ENCODE measurements at regions of chr2 and their contacts with region 1.

Region 1: DNA sequence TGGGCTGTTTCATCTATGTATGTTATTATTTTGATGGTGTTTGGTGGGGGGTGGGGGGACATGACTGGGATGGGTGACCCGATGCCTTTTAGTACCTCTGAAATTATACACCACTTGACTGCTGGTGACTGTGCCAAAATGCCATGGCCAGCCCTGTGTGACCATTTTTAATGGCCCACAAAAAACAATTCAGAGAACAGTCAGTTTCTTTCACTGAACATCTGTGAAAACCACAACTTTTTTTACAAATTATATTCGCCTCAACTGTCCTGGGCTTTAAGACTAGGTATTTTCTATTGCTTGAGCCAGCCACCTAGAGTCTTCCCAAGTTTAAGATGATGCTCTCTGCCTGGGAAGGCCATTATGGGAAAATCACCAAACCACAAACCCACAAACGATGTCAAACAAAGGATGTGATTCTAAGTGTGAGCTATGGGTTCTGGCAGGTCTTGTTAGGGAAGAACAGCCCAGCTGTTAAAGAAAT is 33.9 kb downstream of the FN1 start:
- DNase-seq: peak; percentile 78
- ATAC-seq: peak; percentile 94
- H3K4me3 ChIP-seq: no peak overlapping the region
- H3K27ac ChIP-seq: peak overlapping the region; percentile 36
- H3K4me1 ChIP-seq: peaks cover 12% of the 10 kb centered on the region
- H3K27me3 ChIP-seq: no peaks in the 10 kb centered on the region
- CTCF ChIP-seq: no peak

Region 2: GRCh38 chr2:215356948-215357461 is 44.9 kb before region 1 on chr2:
- CTCF ChIA-PET with region 1: no interaction called
- POLR2A ChIA-PET with region 1: no interaction called
- intact Hi-C with region 1: no loop called
- DNase-seq: no peak
- ATAC-seq: no peak
- H3K4me3 ChIP-seq: no peak overlapping the region
- H3K27ac ChIP-seq: no peak overlapping the region
- H3K4me1 ChIP-seq: no peaks in the 10 kb centered on the region
- H3K27me3 ChIP-seq: no peaks in the 10 kb centered on the region
- CTCF ChIP-seq: no peak

Region 3: DNA sequence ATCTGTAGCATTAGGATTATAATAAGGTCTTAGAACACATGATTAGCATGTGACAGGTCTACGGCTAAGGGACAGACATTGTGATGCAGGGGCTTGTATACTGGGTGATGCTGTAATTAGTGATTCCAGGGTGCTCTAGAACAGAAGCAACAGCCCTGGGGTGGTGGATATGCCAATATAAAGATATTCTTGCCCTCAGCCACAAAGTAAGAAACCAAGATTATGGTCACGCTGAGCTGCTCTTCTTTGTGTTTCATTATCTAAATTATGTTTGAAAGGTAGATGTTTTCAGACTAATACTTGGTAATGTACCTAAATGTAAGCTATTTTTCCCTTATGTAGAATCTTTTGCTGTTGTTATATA is 11.4 kb before region 1 on chr2:
- CTCF ChIA-PET with region 1: interaction called, 10 read pairs
- POLR2A ChIA-PET with region 1: no interaction called
- intact Hi-C with region 1: no loop called
- DNase-seq: no peak
- ATAC-seq: no peak
- H3K4me3 ChIP-seq: no peak overlapping the region
- H3K27ac ChIP-seq: no peak overlapping the region
- H3K4me1 ChIP-seq: no peaks in the 10 kb centered on the region
- H3K27me3 ChIP-seq: no peaks in the 10 kb centered on the region
- CTCF ChIP-seq: no peak